B cell (primary cell): ENCODE measurements at regions of chr6 and their contacts with region 1.

Region 1: DNA sequence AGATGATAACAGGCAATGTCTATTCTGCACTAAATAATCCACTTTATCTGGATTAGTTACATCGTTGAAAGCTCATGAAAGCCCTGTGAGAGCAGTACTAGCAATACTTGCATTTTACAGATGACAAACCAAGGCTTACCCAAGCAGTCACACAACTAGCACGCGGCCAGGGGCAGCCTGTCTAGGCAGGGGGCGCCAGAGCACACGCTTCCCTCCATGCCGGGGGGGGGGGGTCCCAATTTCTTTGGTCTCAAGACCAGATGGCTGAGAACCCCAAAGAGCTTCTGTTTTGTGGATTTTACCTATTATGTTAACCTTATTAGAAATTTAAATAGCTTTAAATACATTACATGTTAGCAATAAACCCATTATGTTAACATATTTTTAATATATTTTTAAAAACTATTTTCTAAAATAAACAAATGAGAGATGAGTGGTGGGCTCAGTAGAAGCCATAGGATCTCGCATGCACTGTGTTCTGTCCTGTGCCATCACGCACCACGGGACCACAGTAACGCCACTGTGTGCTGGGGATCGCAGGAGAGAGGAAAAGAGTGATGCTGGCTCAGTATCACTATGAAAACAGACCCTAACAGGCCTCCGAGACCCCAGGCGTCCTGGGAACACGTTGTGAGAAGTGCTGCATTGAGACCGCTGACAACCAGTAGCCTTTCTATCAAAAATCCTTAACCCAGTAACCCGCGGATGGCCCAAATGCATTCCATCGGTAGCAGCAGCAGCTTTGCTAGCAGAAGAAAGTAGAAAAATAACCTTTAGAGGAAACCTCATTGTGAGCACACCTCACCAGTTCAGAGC is 5.3 kb upstream of the PRR18 start:
- DNase-seq: peak; percentile 76
- ATAC-seq: peak; percentile 88
- H3K4me3 ChIP-seq: no peak overlapping the region
- H3K4me3 Mint-ChIP-seq: no peak overlapping the region
- H3K27ac ChIP-seq: no peak overlapping the region
- H3K27ac Mint-ChIP-seq: no peak overlapping the region
- H3K4me1 ChIP-seq: peaks cover 3 to 4% of the 10 kb centered on the region in 2 donors
- H3K4me1 Mint-ChIP-seq: peaks cover 4% of the 10 kb centered on the region
- H3K27me3 ChIP-seq: peaks cover 0 to 19% (median 7%) of the 10 kb centered on the region in 4 experiments
- H3K27me3 Mint-ChIP-seq: peaks cover 16% of the 10 kb centered on the region
- CTCF ChIP-seq: peak; percentile 84

Region 2: DNA sequence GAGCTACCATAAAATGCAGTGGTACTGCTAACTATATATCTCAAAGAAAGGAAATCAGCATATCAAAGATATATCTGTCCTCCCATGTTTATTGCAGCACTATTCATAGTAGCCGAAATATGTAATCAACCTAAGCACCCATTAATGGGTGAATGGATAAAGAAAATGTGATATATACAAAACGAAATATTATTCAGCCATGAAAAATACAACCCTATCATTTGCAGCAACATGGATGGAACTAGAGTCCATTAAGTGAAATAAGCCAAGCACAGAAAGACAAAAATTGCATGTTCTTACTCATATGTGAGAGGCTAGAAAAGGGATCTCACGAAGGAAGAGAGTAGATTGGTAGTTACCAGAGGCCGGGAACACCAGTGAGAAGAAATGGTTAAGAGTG is 776.6 kb before region 1 on chr6:
- CTCF ChIA-PET with region 1: no interaction called
- POLR2A ChIA-PET with region 1: no interaction called
- intact Hi-C with region 1: no loop called
- DNase-seq: no peak
- ATAC-seq: no peak
- H3K4me3 ChIP-seq: no peak overlapping the region
- H3K4me3 Mint-ChIP-seq: no peak overlapping the region
- H3K27ac ChIP-seq: no peak overlapping the region
- H3K27ac Mint-ChIP-seq: no peak overlapping the region
- H3K4me1 ChIP-seq: no peaks in the 10 kb centered on the region
- H3K4me1 Mint-ChIP-seq: no peaks in the 10 kb centered on the region
- H3K27me3 ChIP-seq: no peaks in the 10 kb centered on the region
- H3K27me3 Mint-ChIP-seq: no peaks in the 10 kb centered on the region
- CTCF ChIP-seq: no peak

Region 3: DNA sequence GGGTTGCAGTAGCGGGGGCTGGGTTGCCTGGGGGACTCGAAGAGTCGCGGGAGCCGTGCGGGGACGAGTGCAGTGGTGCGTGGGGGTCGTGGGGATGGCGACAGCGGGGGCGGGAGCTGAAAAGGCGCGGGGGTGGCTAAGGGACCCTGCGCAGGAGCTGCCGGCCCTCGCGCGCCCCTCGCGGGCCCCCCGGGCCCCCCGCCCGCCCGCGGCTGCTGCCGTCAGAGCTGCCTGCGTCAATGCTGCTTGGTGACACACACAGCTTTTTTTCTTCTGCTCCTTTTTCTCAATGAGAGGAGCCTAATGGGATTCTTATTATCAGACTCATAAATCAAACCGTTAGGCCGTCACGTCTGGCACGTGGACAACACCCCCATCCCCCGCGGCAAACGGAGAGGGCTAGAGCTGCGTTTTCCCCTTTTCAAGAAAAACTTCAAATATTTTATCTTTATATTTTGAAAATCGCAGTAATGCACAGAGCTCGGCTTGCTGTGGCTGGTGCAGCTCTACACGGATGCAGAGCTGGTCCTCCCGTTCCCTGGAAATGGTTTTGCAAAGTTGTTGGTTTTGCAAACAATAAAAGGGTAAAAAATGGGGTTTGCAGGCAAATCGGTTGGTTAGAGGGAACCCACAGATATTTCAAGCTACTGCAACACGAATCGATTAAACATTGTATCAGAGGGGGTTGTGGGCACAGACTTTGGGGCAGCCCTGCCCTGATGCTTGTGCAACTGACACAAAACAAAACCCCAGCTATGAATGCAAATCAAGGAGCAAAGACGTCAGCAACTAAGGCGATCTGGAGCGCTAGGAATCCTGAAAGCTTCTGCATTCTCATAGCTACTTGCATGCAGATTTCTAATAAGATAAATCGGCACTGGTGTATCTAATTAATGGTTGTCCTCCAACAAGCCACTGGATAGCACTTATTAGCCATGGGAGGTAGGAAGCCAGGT is 307.2 kb before region 1 on chr6:
- CTCF ChIA-PET with region 1: no interaction called
- POLR2A ChIA-PET with region 1: no interaction called
- intact Hi-C with region 1: no loop called
- DNase-seq: no peak
- ATAC-seq: no peak
- H3K4me3 ChIP-seq: no peak overlapping the region
- H3K4me3 Mint-ChIP-seq: no peak overlapping the region
- H3K27ac ChIP-seq: no peak overlapping the region
- H3K27ac Mint-ChIP-seq: no peak overlapping the region
- H3K4me1 ChIP-seq: no peaks in the 10 kb centered on the region
- H3K4me1 Mint-ChIP-seq: peaks cover 2% of the 10 kb centered on the region
- H3K27me3 ChIP-seq: peaks cover 0 to 53% (median 14%) of the 10 kb centered on the region in 4 experiments
- H3K27me3 Mint-ChIP-seq: peaks cover 70% of the 10 kb centered on the region
- CTCF ChIP-seq: no peak

Region 4: DNA sequence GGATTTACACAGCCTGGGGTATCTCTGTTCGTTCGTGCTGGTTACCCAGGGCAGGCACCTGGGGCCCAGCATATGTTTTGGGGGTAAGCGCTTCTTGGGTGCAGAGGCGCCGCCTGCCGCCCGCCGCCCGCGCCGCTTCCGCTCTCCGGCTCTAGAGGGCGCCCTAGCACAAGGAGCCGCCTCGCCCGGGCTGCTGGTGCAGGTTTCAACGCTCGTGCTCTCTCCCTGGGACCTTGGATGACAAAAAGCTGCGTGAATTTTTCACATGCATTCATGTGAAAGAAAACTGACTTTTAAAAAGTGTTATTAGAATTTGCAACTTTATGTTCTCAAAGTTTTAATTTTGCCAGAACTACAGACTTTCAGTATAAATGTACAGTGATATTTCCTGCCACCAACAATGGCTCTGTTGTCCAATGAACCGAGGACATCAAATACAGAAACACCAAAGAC is 37.7 kb before region 1 on chr6:
- CTCF ChIA-PET with region 1: interaction called, 61 read pairs
- POLR2A ChIA-PET with region 1: no interaction called
- intact Hi-C with region 1: loop called (anchors 1 kb)
- DNase-seq: peak; percentile 82
- ATAC-seq: peak; percentile 89
- H3K4me3 ChIP-seq: no peak overlapping the region
- H3K4me3 Mint-ChIP-seq: no peak overlapping the region
- H3K27ac ChIP-seq: no peak overlapping the region
- H3K27ac Mint-ChIP-seq: no peak overlapping the region
- H3K4me1 ChIP-seq: peaks cover 0 to 8% of the 10 kb centered on the region in 2 donors
- H3K4me1 Mint-ChIP-seq: peaks cover 14% of the 10 kb centered on the region
- H3K27me3 ChIP-seq: no peaks in the 10 kb centered on the region
- H3K27me3 Mint-ChIP-seq: peaks cover 2% of the 10 kb centered on the region
- CTCF ChIP-seq: peak; percentile 100

Region 5: DNA sequence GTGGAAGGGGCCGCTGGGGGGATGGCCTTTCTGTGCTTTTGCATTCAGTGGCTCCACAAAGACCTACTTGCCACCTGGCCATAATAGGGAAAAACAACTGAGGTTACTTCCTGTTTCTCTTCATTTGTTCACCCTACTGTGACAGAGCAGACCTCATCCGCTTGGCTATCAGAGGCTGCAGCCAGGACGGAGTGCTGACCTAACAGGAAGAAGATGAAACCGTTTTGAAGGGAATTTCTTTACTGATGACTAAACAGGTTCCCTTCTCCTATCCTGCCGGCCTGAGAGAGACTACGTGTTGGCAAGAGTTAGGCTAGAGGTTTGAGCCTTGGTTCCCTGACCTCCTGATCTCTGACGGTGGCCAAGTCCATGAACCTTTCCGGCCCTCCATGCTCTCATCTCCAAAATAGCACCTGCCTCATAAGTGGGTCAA is 26.6 kb before region 1 on chr6:
- CTCF ChIA-PET with region 1: interaction called, 12 read pairs
- POLR2A ChIA-PET with region 1: no interaction called
- intact Hi-C with region 1: no loop called
- DNase-seq: peak; percentile 77
- ATAC-seq: peak; percentile 89
- H3K4me3 ChIP-seq: peak overlapping the region in 3 of 5 experiments; percentile 7 to 27 (median 20)
- H3K4me3 Mint-ChIP-seq: peak overlapping the region; percentile 87
- H3K27ac ChIP-seq: peak overlapping the region; percentile 65 to 66
- H3K27ac Mint-ChIP-seq: peak overlapping the region; percentile 93
- H3K4me1 ChIP-seq: peaks cover 19 to 21% of the 10 kb centered on the region in 2 donors
- H3K4me1 Mint-ChIP-seq: peaks cover 19% of the 10 kb centered on the region
- H3K27me3 ChIP-seq: no peaks in the 10 kb centered on the region
- H3K27me3 Mint-ChIP-seq: peaks cover 10% of the 10 kb centered on the region
- CTCF ChIP-seq: no peak

Region 6: GRCh38 chr6:166325383-166326042 is 12.1 kb after region 1 on chr6:
- CTCF ChIA-PET with region 1: interaction called, 13 read pairs
- POLR2A ChIA-PET with region 1: no interaction called
- intact Hi-C with region 1: no loop called
- DNase-seq: no peak
- ATAC-seq: peak; percentile 31
- H3K4me3 ChIP-seq: no peak overlapping the region
- H3K4me3 Mint-ChIP-seq: no peak overlapping the region
- H3K27ac ChIP-seq: no peak overlapping the region
- H3K27ac Mint-ChIP-seq: peak overlapping the region; percentile 67
- H3K4me1 ChIP-seq: peaks cover 0 to 6% of the 10 kb centered on the region in 2 donors
- H3K4me1 Mint-ChIP-seq: peaks cover 14% of the 10 kb centered on the region
- H3K27me3 ChIP-seq: no peaks in the 10 kb centered on the region
- H3K27me3 Mint-ChIP-seq: no peaks in the 10 kb centered on the region
- CTCF ChIP-seq: no peak

Region 7: DNA sequence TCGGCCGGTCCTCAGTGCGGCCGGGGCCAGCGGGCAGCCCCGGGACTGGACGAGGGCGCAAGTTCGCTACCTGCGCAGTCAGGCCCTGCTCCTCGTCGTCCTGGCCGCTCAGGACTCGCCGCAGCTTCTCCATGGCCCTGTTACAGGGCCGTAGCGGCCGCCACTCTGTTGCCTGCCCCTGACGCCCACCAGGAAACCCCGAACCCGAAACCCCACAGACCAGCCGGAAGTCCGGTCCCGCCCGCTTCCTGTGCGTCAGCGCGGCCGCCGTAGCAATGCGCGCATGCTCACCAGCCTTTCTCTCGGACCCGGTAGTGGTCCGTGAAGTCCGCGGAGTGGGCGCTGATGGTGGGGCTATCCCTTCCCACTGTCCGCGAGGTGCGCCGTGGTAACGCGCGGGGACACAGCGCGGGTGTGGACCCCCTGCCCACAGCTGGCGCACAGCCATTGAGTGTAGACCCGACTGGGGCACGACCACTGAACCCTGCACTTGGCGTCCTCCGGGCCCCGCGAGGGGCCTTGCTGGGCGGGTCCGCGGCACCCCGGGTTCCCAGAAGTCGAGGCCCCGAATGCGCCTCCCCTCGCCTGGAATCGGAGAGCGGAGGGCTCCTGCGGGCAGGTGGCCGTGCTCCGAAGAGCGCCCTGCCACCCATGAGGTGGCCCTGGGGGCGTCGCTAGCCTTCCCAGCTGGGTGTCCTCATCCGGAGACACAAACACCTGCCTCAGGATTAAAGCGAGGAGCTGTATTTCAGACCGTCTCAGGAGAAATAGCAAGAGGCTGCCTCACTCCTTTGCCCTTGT is 29.1 kb after region 1 on chr6 and contains the start of gene SFT2D1:
- CTCF ChIA-PET with region 1: interaction called, 7 read pairs
- POLR2A ChIA-PET with region 1: no interaction called
- intact Hi-C with region 1: loop called (anchors 2 kb)
- DNase-seq: peak; percentile 89
- ATAC-seq: peak; percentile 79
- H3K4me3 ChIP-seq: peak within 1 kb of the TSS; percentile 91 to 100 (median 97)
- H3K4me3 Mint-ChIP-seq: peak within 1 kb of the TSS; percentile 90
- H3K27ac ChIP-seq: peak within 1 kb of the TSS; percentile 99 to 100
- H3K27ac Mint-ChIP-seq: peak within 1 kb of the TSS; percentile 97
- H3K4me1 ChIP-seq: peaks cover 34 to 44% of the 10 kb centered on the region in 2 donors
- H3K4me1 Mint-ChIP-seq: peaks cover 17% of the 10 kb centered on the region
- H3K27me3 ChIP-seq: no peaks in the 10 kb centered on the region
- H3K27me3 Mint-ChIP-seq: no peaks in the 10 kb centered on the region
- CTCF ChIP-seq: no peak
- total RNA-seq, gene SFT2D1: 52.0 and 59.0 TPM in 2 replicates